ENCODE measurements at regions of chr5 and their contacts with region 1.

Region 1: GRCh38 chr5:33936004-33936380 is 194 bp upstream of the RXFP3 start:
- H3K4me3 ChIP-seq: no peak overlapping the region; the same call in 1 of the 2 replicates
- H3K27ac ChIP-seq: no peak overlapping the region
- H3K4me1 ChIP-seq: no peaks in the 10 kb centered on the region
- CTCF ChIP-seq: no peak

Region 2: DNA sequence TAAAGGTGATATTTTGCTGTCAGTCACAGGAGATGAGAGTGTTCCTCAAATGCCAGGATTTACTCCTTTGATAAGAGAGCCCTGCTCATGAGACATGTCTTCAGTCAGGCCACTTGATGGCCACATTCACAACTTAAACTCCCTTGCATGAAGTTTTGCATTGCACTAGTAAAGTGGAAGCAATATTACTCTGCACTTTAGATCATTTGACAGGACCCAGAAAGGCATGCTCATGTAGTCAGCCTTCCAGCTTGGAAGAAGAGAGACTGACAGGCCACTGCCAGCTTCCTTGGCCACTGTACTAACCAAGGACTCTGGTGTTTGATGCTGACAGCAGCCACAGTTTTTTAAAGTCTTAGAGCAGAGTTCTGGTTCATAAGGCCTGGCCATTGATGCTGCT is 1182.2 kb before region 1 on chr5:
- CTCF ChIA-PET with region 1: no interaction called
- POLR2A ChIA-PET with region 1: no interaction called
- H3K4me3 ChIP-seq: no peak overlapping the region
- H3K27ac ChIP-seq: no peak overlapping the region
- H3K4me1 ChIP-seq: no peaks in the 10 kb centered on the region
- CTCF ChIP-seq: no peak

Region 3: GRCh38 chr5:33958176-33958575 is 22.2 kb after region 1 on chr5:
- CTCF ChIA-PET with region 1: interaction called, 11 read pairs
- POLR2A ChIA-PET with region 1: no interaction called
- H3K4me3 ChIP-seq: no peak overlapping the region
- H3K27ac ChIP-seq: no peak overlapping the region
- H3K4me1 ChIP-seq: no peaks in the 10 kb centered on the region
- CTCF ChIP-seq: no peak